PC-9 (cell line): ENCODE measurements at regions of chr3 and their contacts with region 1.

Region 1: GRCh38 chr3:19885468-19885867 is 48.5 kb downstream of the EFHB start:
- DNase-seq: no peak
- H3K4me3 ChIP-seq: no peak overlapping the region
- H3K27ac ChIP-seq: no peak overlapping the region
- H3K4me1 ChIP-seq: peaks cover 28% of the 10 kb centered on the region
- H3K27me3 ChIP-seq: no peaks in the 10 kb centered on the region
- CTCF ChIP-seq: peak; percentile 81

Region 2: DNA sequence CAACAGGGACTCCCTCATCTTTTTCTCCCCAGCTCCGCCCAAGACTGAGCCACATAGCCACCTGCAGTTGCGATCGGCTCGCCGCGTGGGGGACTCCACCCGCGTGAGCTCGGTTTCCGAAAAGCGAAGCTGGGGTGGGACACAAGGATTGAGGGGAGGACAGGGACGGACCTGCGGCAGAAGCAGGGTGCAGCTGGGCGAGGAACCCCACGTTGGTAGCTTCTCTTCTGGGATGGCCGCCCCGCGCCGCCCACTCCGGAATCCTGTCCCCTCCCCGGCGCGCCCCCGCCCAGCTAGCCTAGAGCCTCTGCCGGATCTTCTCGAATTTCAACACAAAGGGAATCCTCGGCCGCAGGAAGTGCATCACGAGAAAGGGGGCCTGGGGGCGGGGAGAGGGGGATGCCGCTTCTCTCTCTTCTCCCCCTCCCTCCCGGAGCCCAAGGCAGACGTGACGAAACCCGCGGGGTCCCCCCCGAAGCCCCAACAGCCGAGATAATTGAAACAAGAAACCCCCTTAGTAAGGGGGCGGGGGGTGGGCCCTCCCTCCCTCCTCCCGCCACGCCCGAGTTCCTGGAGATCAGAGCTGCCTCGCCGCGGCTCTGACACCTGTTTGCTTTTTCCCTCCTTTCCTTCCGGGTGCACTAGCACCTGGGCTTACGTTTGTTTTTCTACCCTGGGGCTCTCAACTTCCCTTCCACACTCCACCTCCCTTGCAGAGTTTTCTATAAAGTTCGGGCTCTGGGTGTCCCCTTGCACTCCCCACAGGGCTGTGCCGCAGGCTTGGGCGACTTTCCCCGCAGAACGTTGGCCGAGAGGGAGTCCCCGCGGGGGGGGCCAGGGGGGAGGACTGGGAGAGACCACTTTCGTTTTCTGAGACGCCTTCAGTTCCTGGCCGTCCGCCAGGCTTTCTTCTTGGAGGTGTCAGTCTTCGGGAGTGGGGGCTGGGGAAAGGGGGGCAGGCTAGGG is 738.5 kb before region 1 on chr3:
- CTCF ChIA-PET with region 1: interaction called, 3 read pairs
- POLR2A ChIA-PET with region 1: no interaction called
- intact Hi-C with region 1: loop called (anchors 10 kb)
- DNase-seq: peak; percentile 60 to 75
- H3K4me3 ChIP-seq: peak overlapping the region; percentile 64
- H3K27ac ChIP-seq: no peak overlapping the region
- H3K4me1 ChIP-seq: 0 out of 2 replicates have a peak, but pooled peaks cover 5% of the 10 kb centered on the region
- H3K27me3 ChIP-seq: no peaks in the 10 kb centered on the region
- CTCF ChIP-seq: peak; percentile 57; the same call in 1 of the 2 replicates

Region 3: DNA sequence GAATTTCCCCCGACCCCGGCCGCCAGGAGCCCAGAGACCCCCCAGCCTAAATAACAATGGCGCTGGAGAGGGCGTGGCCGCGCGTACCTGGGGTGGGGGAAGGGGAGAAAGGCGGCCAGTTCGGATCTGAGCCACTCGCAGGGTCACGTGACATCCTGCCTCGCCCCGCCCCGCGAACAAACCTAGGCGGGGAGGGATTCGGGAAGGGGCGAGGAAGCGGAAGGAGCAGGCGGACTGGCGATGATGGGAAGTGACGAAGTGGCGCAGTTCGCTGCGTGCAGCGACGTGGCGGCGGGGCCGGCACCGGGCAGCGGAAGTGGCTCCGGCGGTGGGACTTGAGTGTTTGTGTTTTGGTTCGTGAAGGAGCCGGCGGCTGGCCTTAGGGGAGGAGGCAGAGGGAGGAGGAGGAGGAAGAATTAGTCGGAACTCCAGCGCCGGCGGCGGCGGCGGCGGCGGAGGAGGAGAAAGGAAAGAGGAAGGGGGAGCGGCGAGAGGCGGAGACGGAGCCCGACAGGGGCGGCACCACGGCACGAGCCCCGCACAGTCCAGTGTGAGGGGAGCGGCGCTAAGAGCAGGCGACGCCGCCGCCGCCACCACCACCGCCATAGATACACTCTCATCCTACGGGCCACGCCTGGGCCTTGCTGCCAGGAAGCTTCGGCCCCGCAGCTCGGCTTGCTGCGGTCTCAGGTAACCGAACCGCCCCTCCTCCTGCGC is 61.5 kb after region 1 on chr3 and contains the start of gene RAB5A:
- CTCF ChIA-PET with region 1: no interaction called
- POLR2A ChIA-PET with region 1: interaction called, 5 read pairs
- intact Hi-C with region 1: loop called (anchors 1 kb)
- DNase-seq: peak; percentile 91 to 96
- H3K4me3 ChIP-seq: peak within 1 kb of the TSS; percentile 69
- H3K27ac ChIP-seq: peak within 1 kb of the TSS; percentile 97
- H3K4me1 ChIP-seq: peaks cover 32% of the 10 kb centered on the region
- H3K27me3 ChIP-seq: no peaks in the 10 kb centered on the region
- CTCF ChIP-seq: no peak
- total RNA-seq, gene RAB5A: 62.7 and 65.1 TPM in 2 replicates

Region 4: DNA sequence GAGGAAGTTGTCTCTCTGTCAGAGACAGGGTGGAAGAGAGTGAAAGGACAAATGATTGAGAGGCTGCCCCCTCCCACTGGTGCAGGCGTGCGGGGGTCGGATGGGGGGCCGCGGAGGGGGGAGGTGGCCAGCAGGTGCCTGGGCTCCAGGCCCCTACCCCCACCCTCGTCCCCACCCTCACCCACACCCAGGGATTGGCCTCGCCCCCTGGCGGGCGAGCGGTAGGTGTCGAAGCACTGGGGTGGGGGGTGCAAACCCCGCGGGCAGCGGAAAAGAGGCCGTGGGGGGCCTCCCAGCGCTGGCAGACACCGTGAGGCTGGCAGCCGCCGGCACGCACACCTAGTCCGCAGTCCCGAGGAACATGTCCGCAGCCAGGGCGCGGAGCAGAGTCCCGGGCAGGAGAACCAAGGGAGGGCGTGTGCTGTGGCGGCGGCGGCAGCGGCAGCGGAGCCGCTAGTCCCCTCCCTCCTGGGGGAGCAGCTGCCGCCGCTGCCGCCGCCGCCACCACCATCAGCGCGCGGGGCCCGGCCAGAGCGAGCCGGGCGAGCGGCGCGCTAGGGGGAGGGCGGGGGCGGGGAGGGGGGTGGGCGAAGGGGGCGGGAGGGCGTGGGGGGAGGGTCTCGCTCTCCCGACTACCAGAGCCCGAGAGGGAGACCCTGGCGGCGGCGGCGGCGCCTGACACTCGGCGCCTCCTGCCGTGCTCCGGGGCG is 154.5 kb after region 1 on chr3 and contains the start of gene KAT2B:
- CTCF ChIA-PET with region 1: no interaction called
- POLR2A ChIA-PET with region 1: no interaction called
- intact Hi-C with region 1: loop called (anchors 2 kb)
- DNase-seq: peak in 1 of 2 experiments; percentile 67
- H3K4me3 ChIP-seq: peak within 1 kb of the TSS; percentile 80
- H3K27ac ChIP-seq: no peak within 1 kb of the TSS
- H3K4me1 ChIP-seq: peaks cover 26% of the 10 kb centered on the region
- H3K27me3 ChIP-seq: no peaks in the 10 kb centered on the region
- CTCF ChIP-seq: peak; percentile 79
- total RNA-seq, gene KAT2B: 2.5 and 3.2 TPM in 2 replicates

Region 5: GRCh38 chr3:20080956-20081554 is 195.6 kb after region 1 on chr3:
- CTCF ChIA-PET with region 1: no interaction called
- POLR2A ChIA-PET with region 1: no interaction called
- intact Hi-C with region 1: no loop called
- DNase-seq: peak in 1 of 2 experiments; percentile 0
- H3K4me3 ChIP-seq: no peak overlapping the region
- H3K27ac ChIP-seq: no peak overlapping the region
- H3K4me1 ChIP-seq: no peaks in the 10 kb centered on the region
- H3K27me3 ChIP-seq: no peaks in the 10 kb centered on the region
- CTCF ChIP-seq: no peak

Region 6: GRCh38 chr3:20324714-20325478 is 439.4 kb after region 1 on chr3:
- CTCF ChIA-PET with region 1: no interaction called
- POLR2A ChIA-PET with region 1: no interaction called
- intact Hi-C with region 1: loop called (anchors 5 kb)
- DNase-seq: peak; percentile 36 to 78
- H3K4me3 ChIP-seq: no peak overlapping the region
- H3K27ac ChIP-seq: peak overlapping the region; percentile 78
- H3K4me1 ChIP-seq: no peaks in the 10 kb centered on the region; the same call in 1 of the 2 replicates
- H3K27me3 ChIP-seq: no peaks in the 10 kb centered on the region
- CTCF ChIP-seq: no peak